Activated CD4-positive, alpha-beta memory T cell treated with anti-CD3 and anti-CD28 coated beads, Interleukin-2, amount 10 ng/mL, durations not matched to agents 7 days and 5 days (primary cell): ENCODE measurements at regions of chr20 and their contacts with region 1.

Region 1: DNA sequence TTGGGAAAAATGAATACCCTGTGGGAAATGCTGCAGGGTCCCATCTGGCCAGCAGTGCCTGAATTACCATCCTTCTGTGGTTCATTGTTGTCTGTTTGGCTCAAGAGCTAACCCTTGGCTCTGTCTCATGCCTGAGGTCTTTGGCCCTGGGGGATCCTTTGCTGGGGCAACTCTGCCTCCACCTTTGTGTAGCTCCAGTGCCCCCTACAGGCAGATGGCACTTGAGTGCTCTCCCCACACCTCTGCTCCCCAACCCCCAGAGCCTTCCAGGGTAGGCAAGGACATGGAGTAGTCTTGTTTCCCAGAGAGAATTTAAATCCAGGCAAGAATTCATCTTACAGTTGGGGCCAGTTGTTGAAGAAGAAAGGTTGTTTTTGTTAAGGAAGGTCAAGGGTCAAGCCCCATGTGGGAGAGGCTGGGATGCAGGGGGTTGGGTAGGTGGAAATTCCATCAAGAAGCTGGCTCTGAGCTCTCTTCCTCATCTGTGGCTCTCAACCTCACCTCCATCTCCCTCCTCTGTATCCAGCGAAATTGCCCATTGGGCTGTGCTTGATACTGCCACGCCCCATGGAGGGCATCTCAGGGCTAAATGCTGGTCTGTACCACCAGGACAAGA is 44.2 kb downstream of the ZNF831 start:
- DNase-seq: peak; percentile 80
- H3K4me3 Mint-ChIP-seq: no peak overlapping the region
- H3K27ac Mint-ChIP-seq: no peak overlapping the region
- H3K4me1 Mint-ChIP-seq: peaks cover 2% of the 10 kb centered on the region
- H3K27me3 Mint-ChIP-seq: no peaks in the 10 kb centered on the region

Region 2: GRCh38 chr20:59222253-59223181 is 14.7 kb after region 1 on chr20:
- CTCF ChIA-PET with region 1: interaction called, 13 read pairs
- POLR2A ChIA-PET with region 1: no interaction called
- DNase-seq: peak; percentile 80
- H3K4me3 Mint-ChIP-seq: peak overlapping the region; percentile 69
- H3K27ac Mint-ChIP-seq: no peak overlapping the region
- H3K4me1 Mint-ChIP-seq: peaks cover 9% of the 10 kb centered on the region
- H3K27me3 Mint-ChIP-seq: no peaks in the 10 kb centered on the region

Region 3: GRCh38 chr20:59242714-59243113 is 34.9 kb after region 1 on chr20:
- CTCF ChIA-PET with region 1: no interaction called
- POLR2A ChIA-PET with region 1: no interaction called
- DNase-seq: peak; percentile 60
- H3K4me3 Mint-ChIP-seq: no peak overlapping the region
- H3K27ac Mint-ChIP-seq: peak overlapping the region; percentile 25
- H3K4me1 Mint-ChIP-seq: peaks cover 13% of the 10 kb centered on the region
- H3K27me3 Mint-ChIP-seq: no peaks in the 10 kb centered on the region

Region 4: DNA sequence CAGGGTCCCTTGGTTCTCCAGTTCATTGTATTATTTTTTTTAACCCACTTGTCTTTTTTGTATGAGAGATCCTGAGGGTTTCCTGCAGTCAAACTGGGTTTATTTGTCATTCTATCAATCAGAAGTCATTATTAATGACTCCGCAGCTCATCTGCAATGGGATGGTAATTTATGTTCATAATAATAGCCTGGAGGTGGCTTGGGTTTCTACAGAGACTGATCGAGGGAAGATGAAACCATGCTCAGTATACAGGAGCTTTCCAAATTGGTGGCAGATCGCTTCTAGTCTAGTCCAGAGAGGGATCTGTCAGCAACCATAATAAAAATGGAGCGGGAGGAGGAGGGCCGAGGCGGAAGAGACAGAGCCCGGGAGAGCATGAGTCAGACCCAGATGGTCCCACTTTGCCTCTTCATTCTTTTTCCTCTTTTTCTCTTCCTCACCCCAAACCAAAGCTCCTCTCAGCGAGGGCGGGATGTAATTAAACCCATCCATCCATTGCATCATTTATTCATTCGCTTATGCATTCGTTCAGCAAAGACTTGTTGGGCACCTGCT is 115.1 kb after region 1 on chr20:
- CTCF ChIA-PET with region 1: no interaction called
- POLR2A ChIA-PET with region 1: no interaction called
- DNase-seq: no peak
- H3K4me3 Mint-ChIP-seq: no peak overlapping the region
- H3K27ac Mint-ChIP-seq: no peak overlapping the region
- H3K4me1 Mint-ChIP-seq: no peaks in the 10 kb centered on the region
- H3K27me3 Mint-ChIP-seq: peaks cover 4% of the 10 kb centered on the region